HEK293T (cell line): ENCODE measurements at regions of chr19 and their contacts with region 1.

Region 1: DNA sequence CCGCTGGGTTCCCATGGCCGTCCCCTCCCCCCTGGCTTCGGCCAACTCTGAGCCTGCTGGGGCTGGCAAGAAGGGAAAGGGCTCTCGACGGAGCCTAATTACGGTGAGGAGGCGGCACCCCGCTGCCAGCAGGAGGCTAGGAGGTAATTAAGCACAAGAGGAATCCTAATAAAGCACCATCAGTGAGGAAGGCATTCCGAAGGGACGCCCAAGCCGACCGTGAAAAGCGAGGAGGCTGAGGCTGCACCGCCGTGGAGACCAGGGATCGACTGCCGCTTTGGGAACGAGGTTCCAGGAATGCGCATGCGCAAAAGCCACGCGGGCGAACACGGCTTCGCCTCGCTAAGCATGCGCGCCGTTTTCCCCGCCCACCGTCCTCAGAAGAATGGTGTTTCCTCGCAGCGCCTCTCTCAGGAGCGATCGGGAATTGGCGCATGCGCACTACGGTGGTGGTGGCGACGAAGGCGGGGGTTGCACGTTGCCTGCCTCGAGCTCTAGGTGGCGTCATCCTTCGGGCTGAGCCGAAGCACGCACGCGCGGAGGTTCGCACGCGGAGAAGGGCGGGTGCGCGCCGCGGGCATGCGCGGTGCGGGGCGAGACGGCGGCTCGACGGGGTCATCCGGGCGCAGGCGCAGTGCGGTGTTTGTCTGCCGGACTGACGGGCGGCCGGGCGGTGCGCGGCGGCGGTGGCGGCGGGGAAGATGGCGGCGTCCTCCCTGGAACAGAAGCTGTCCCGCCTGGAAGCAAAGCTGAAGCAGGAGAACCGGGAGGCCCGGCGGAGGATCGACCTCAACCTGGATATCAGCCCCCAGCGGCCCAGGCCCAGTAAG is at the start of gene MAP2K7:
- DNase-seq: peak; percentile 99

Region 2: DNA sequence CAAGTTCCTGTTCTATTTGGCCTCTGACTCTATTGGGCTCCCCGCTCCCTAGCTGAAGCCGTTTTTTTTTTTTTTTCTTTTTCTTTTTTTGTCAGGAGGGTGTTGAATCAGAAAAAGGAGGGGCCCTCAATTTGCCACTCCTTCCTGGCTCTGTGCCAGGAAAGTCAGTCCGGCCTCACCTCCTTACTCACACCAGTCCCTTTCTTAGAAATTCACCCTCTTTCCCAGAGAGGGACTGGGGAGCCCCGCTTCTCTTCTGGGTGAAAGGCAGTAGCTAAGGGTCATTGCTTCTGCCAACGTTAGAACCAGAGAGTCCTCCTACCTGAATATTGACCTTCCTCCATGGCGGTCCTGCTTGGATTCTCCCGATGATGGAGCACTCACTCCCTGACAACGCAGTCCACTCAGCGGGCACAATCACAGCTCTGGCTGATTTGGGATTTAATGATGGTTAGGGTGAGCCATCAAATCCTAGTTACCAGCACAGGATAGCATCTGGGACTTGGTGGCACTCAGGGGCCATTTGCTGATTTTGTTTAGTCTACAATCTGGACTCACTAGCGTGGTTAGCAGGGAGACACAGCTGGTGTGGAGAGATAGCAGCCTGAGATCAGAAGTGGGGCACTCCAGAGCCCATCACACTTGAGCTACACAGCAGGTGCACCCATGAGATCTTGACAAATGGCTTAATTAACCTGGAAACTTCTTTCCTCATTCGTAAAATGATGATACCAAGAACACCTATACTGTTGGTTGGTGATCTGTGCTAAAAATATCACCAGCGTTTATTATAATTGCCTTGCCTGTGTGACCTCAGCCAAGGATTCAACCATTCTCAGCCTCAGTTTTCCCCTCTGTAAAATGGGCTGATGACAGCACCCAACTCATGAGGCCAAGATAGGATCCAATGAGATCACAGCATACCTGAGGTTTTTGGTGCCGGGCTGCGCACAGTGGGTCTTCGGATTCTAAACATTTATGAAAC is 203.8 kb before region 1 on chr19:
- CTCF ChIA-PET with region 1: no interaction called
- POLR2A ChIA-PET with region 1: no interaction called
- DNase-seq: no peak

Region 3: GRCh38 chr19:7888145-7888825 is 15.2 kb before region 1 on chr19 and contains the start of gene LRRC8E:
- CTCF ChIA-PET with region 1: no interaction called
- POLR2A ChIA-PET with region 1: interaction called, 14 read pairs
- DNase-seq: peak; percentile 80

Region 4: GRCh38 chr19:7919610-7920518 is 16.4 kb after region 1 on chr19 and contains the start of gene SNAPC2:
- CTCF ChIA-PET with region 1: interaction called, 5 read pairs
- POLR2A ChIA-PET with region 1: interaction called, 30 read pairs
- DNase-seq: peak; percentile 85

Region 5: DNA sequence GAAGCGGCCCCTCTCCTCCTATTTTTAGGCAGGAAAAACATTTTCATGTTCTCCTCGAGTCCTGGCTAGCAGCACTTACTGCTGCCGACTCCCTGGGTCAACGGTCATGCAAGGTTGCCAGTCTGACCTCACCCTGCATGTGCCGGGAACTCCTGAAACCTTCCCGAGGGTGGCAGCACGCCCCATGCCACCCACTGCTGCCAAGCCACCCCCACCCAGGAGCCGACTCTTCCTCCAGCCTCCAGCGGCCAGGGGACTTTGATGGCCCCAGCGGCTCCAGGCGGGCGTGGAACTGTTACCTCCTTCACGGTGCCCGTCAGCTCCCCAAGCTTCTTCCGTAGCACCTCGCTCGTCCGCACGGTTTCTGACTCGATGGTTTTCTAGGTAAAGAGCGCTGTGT is 31.3 kb after region 1 on chr19:
- CTCF ChIA-PET with region 1: no interaction called
- POLR2A ChIA-PET with region 1: no interaction called
- DNase-seq: no peak